Breast epithelium (tissue), 4 donors: ENCODE measurements at regions of chr9 and their contacts with region 1.

Region 1: GRCh38 chr9:84953797-84954705 is 284.5 kb downstream of the NTRK2 start:
- DNase-seq: peak; percentile 84 to 88
- H3K4me3 ChIP-seq: peak overlapping the region in 1 of 3 donors; percentile 44
- H3K27ac ChIP-seq: peak overlapping the region; percentile 62 to 84
- H3K4me1 ChIP-seq: no peaks in the 10 kb centered on the region
- H3K27me3 ChIP-seq: no peaks in the 10 kb centered on the region
- CTCF ChIP-seq: peak; percentile 92 to 95 (median 92)
- POLR2A ChIP-seq: no peak

Region 2: GRCh38 chr9:84668196-84669012 is 285.6 kb before region 1 on chr9:
- intact Hi-C with region 1: loop called (anchors 10 kb)
- DNase-seq: peak; percentile 64 to 78
- H3K4me3 ChIP-seq: peak overlapping the region; percentile 68 to 84 (median 69)
- H3K27ac ChIP-seq: peak overlapping the region; percentile 96 to 97
- H3K4me1 ChIP-seq: no peaks in the 10 kb centered on the region
- H3K27me3 ChIP-seq: peaks cover 3 to 9% of the 10 kb centered on the region in 2 donors
- CTCF ChIP-seq: peak; percentile 23 to 46 (median 41)
- POLR2A ChIP-seq: no peak

Region 3: GRCh38 chr9:84966876-84967833 is 13.1 kb after region 1 on chr9:
- intact Hi-C with region 1: no loop called
- DNase-seq: no peak
- H3K4me3 ChIP-seq: no peak overlapping the region
- H3K27ac ChIP-seq: peak overlapping the region; percentile 37 to 63
- H3K4me1 ChIP-seq: no peaks in the 10 kb centered on the region
- H3K27me3 ChIP-seq: no peaks in the 10 kb centered on the region
- CTCF ChIP-seq: no peak
- POLR2A ChIP-seq: no peak

Region 4: DNA sequence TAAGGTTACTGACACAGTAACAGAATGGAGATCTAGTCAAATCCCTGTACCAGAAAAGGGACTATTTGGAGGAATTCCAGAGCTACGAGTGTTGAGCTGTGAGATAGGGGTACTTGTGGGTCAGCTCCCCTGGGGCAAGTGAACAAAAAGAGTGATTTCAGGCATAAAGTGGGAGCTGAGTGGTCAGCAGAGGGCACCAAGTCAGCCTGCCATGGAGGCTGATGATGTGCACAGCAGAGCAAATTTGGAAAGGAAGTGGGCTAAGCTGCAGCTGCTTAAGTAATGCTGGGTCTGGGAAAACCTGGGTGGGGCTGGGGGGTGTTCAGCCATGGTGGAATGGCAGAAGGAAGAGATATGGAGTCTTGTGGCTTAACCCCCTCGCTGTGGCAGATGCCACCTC is 43.4 kb after region 1 on chr9:
- intact Hi-C with region 1: no loop called
- DNase-seq: no peak
- H3K4me3 ChIP-seq: no peak overlapping the region
- H3K27ac ChIP-seq: no peak overlapping the region
- H3K4me1 ChIP-seq: no peaks in the 10 kb centered on the region
- H3K27me3 ChIP-seq: no peaks in the 10 kb centered on the region
- CTCF ChIP-seq: no peak
- POLR2A ChIP-seq: no peak

Region 5: GRCh38 chr9:85610074-85610860 is 656.2 kb after region 1 on chr9:
- intact Hi-C with region 1: no loop called
- DNase-seq: no peak
- H3K4me3 ChIP-seq: peak overlapping the region in 2 of 3 donors; percentile 27 to 52
- H3K27ac ChIP-seq: no peak overlapping the region
- H3K4me1 ChIP-seq: no peaks in the 10 kb centered on the region
- H3K27me3 ChIP-seq: no peaks in the 10 kb centered on the region
- CTCF ChIP-seq: peak; percentile 56 to 79 (median 66)
- POLR2A ChIP-seq: no peak